Right ventricle myocardium inferior (tissue), 1 donor: ENCODE measurements at regions of chr2 and their contacts with region 1.

Region 1: GRCh38 chr2:26144953-26145680 is 27.8 kb upstream of the GAREM2 start:
- DNase-seq: peak; percentile 71
- ATAC-seq: no peak

Region 2: DNA sequence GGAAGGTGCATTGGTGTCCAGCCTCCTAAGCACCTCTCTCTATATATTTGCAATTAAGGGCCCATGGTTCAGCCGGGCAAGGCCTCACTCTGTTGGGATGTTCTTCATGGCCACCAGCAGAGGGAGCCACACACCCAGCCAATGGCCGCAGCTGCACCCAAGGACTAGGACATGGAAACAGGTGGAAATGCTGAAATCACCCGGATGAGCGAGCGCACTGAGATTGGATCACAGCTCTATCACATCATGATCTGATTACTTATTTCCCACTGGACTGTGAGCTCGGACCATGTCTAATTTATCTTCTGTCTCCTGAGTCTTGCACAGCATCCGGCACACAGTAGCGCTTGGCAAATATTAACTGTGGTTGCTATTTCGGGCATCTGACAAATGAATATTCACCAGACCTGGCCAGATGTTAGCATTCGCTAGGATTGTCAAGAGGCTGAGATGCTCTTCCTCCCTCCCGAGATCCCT is 194.0 kb before region 1 on chr2:
- intact Hi-C with region 1: loop called (anchors 2 kb)
- DNase-seq: peak; percentile 89
- ATAC-seq: peak; percentile 95

Region 3: DNA sequence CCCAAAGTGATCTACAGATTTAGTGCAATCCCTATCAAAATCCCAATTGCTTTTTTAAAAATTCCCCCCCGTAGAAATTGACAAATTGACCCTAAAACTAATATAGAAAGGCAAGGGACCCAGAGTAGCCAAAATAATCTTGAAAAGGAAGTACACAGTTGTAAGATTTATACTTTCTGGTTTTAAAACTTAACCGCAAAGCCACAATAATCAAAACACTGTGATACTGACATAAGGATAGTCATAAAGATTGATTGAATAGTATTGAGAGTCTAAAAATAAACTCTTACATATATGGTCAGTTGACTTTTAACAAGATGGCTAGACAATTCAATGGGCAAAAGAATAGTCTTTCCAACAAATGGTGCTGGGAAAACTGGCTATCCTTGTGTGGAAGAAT is 31.0 kb before region 1 on chr2:
- intact Hi-C with region 1: no loop called
- DNase-seq: no peak
- ATAC-seq: no peak